CD8-positive, alpha-beta memory T cell (primary cell): ENCODE measurements at regions of chr5 and their contacts with region 1.

Region 1: DNA sequence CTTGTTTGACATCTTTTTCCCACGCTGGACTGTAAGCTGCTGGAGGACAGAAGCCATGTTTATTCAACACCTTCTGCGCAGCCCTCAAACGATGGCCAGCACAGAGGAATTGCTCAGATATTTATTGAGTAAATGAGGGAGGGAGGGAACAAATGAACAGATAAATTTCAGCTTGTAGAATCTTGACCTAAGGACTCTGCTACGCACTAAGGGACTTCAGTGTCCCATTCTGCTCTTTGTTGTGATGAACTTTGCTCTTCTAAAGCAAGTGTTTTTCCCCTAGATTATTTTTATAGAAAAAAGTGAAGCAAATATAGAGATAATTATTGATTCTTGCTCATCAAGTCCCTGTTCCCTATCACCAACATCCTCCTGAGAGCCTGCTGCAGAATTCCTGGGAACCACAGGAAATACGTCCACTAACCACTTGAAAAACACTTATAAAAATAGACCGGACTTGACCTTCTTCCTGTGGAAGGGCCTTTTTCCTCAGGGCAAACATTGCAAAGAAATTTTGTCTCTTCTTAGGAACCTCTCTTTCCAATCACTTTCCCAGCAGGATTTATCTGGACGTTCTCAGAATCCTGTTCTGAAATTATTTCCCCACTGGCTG is 54.9 kb downstream of the FGF1 start:
- DNase-seq: no peak
- H3K4me3 ChIP-seq: no peak overlapping the region
- H3K4me3 Mint-ChIP-seq: no peak overlapping the region
- H3K27ac ChIP-seq: no peak overlapping the region
- H3K27ac Mint-ChIP-seq: no peak overlapping the region
- H3K4me1 ChIP-seq: no peaks in the 10 kb centered on the region
- H3K4me1 Mint-ChIP-seq: no peaks in the 10 kb centered on the region
- H3K27me3 ChIP-seq: no peaks in the 10 kb centered on the region
- H3K27me3 Mint-ChIP-seq: peaks cover 8 to 26% of the 10 kb centered on the region in 2 donors

Region 2: DNA sequence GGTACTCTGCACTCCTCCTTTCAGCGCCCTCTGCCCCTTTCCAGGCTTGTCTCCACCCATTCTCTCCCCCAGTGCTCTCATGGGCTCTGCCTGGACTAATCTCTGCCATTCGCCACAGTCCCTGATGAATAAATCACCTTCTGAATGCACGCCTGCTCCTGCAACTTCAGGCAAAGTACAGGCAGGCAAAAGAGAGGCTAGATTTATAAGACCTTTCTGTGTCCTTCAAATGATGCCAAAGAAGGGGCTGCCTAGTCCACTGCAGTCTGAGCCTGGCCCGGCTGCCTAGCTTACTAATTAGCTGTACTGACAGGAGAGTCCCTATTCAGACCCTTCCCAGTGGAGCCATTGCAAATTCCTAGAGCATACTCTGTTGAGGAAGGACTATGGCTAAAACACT is 47.5 kb after region 1 on chr5:
- CTCF ChIA-PET with region 1: no interaction called
- POLR2A ChIA-PET with region 1: interaction called, 10 read pairs
- DNase-seq: no peak
- H3K4me3 ChIP-seq: no peak overlapping the region
- H3K4me3 Mint-ChIP-seq: no peak overlapping the region
- H3K27ac ChIP-seq: no peak overlapping the region
- H3K27ac Mint-ChIP-seq: no peak overlapping the region
- H3K4me1 ChIP-seq: no peaks in the 10 kb centered on the region
- H3K4me1 Mint-ChIP-seq: no peaks in the 10 kb centered on the region
- H3K27me3 ChIP-seq: no peaks in the 10 kb centered on the region
- H3K27me3 Mint-ChIP-seq: peaks cover 9 to 11% of the 10 kb centered on the region in 2 donors